Adrenal gland (tissue), 19 donors: ENCODE measurements at regions of chr12 and their contacts with region 1.

Region 1: GRCh38 chr12:75526655-75527511 is 15.5 kb upstream of the KRR1 start:
- DNase-seq: peak in 1 of 7 donors; percentile 2
- H3K4me3 ChIP-seq: no peak overlapping the region
- H3K27ac ChIP-seq: no peak overlapping the region
- H3K4me1 ChIP-seq: no peaks in the 10 kb centered on the region
- H3K27me3 ChIP-seq: no peaks in the 10 kb centered on the region
- CTCF ChIP-seq: peak; percentile 50 to 80 (median 69)
- POLR2A ChIP-seq: no peak

Region 2: GRCh38 chr12:76031537-76032073 is 504.7 kb after region 1 on chr12 and contains the start of gene PHLDA1:
- intact Hi-C with region 1: loop called (anchors 5 to 10 kb)
- DNase-seq: peak; percentile 92 to 97 (median 96)
- H3K4me3 ChIP-seq: peak within 1 kb of the TSS; percentile 63 to 73 (median 70)
- H3K27ac ChIP-seq: peak within 1 kb of the TSS; percentile 86 to 96 (median 93)
- H3K4me1 ChIP-seq: peaks cover 17 to 38% of the 10 kb centered on the region in 2 donors
- H3K27me3 ChIP-seq: no peaks in the 10 kb centered on the region
- CTCF ChIP-seq: peak; percentile 20 to 76 (median 58)
- POLR2A ChIP-seq: peak; percentile 78 to 94
- total RNA-seq, gene PHLDA1: 13.1 to 49.3 (median 33.3) TPM

Region 3: GRCh38 chr12:76037130-76038103 is 510.5 kb after region 1 on chr12:
- intact Hi-C with region 1: loop called (anchors 5 to 10 kb)
- DNase-seq: peak in 5 of 7 donors; percentile 25 to 52 (median 35)
- H3K4me3 ChIP-seq: no peak overlapping the region
- H3K27ac ChIP-seq: no peak overlapping the region
- H3K4me1 ChIP-seq: peaks cover 12 to 14% of the 10 kb centered on the region in 2 donors
- H3K27me3 ChIP-seq: no peaks in the 10 kb centered on the region
- CTCF ChIP-seq: peak; percentile 64 to 90 (median 82)
- POLR2A ChIP-seq: no peak

Region 4: DNA sequence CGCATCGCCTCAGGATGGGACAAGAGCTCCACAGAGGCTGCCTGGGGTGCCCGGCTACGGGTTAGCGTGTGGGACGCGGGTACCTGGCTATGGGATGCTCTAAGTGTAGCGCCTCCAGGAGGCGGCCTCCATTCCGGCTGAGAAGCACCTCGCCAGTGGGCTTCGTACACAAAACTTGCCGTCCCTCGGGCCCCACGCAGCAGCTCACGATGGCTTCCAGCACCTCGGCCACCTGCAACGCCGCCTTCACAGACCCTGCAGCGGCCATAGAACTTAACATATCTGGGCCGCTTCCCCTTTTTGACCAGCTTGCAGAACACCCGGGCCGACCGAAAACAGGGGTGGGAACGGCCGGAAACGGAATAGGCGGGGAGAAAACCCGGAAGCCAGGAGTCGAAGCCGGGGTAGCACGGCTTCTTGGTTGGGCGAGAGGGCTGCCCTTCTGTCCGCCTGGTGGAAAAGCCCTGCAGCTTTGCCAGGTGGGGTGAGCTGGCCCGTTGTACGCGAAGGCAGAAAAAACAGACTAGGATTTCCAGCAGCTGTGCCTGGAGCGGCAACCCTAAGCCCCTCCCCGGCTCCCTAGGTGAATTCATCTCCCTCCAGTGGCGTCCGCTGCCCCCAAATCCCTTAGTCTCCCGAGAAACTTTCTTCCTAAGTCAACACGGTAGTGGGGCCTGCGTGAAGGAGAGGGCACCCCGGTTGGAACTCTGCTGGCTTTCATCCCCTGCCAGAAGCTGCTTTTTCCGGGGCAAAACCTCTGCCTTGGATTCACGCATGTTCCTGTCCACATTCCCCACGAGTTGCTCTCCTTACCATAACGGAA is 821.4 kb after region 1 on chr12 and contains the start of gene BBS10:
- intact Hi-C with region 1: loop called in 1 of 2 experiments (anchors 10 kb)
- DNase-seq: peak; percentile 90 to 96 (median 93)
- H3K4me3 ChIP-seq: peak within 1 kb of the TSS; percentile 21 to 71 (median 44)
- H3K27ac ChIP-seq: peak within 1 kb of the TSS; percentile 44 to 90 (median 86)
- H3K4me1 ChIP-seq: peaks cover 13 to 32% of the 10 kb centered on the region in 2 donors
- H3K27me3 ChIP-seq: no peaks in the 10 kb centered on the region
- CTCF ChIP-seq: peak; percentile 15 to 47 (median 36)
- POLR2A ChIP-seq: peak in 1 of 2 donors; percentile 58
- total RNA-seq, gene BBS10: 7.5 to 25.4 (median 11.0) TPM